CD14-positive monocyte (primary cell): ENCODE measurements at regions of chr11 and their contacts with region 1.

Region 1: DNA sequence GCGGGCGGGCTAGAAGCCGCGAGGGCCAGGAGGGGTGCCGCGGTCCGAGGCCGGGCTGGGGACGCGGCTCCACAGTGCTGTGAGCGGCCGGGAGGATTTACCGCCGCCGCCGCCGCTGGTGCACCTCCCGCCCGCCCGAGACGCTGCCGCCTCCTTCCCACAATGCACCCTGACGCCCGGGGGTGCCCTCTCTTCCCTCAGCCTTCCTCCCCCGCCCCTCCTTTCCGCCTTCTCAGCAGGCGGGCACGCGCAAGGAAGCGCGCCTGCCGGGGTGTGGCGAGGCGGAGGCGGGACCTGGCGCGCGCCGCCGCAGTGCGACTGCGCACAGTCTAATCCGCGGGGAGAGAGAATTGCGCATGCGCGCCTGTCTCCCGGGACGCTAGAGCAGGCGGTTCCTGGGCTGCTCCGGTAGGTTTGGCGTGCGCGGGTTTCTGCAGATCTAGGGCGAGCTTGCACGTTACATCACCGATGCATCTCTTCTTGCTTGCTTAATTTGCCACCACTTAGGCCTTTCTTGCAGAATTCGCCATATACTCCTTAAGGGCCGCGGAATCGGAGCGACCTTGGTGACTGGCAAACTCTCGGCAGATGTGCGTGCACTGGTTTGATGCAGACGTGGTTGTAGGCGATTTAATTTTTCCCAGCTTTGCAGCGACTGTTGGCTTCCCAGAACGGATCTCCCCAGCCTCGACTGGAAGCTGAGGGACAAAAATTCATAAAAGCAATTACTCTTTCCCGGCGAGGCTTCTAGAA is at the starts of genes GVQW3 and THAP12:
- DNase-seq: peak; percentile 97 to 98 (median 98)
- H3K4me3 ChIP-seq: peak within 1 kb of the TSS; percentile 70 to 93 (median 74)
- H3K4me3 Mint-ChIP-seq: peak within 1 kb of the TSS; percentile 96 to 97
- H3K27ac ChIP-seq: peak within 1 kb of the TSS; percentile 11 to 84
- H3K27ac Mint-ChIP-seq: peak within 1 kb of the TSS; percentile 88 to 96 (median 93)
- H3K4me1 ChIP-seq: peaks cover 28 to 37% of the 10 kb centered on the region in 2 donors
- H3K4me1 Mint-ChIP-seq: peaks cover 59% of the 10 kb centered on the region
- H3K27me3 ChIP-seq: no peaks in the 10 kb centered on the region
- H3K27me3 Mint-ChIP-seq: peaks cover 0 to 4% (median 0%) of the 10 kb centered on the region in 3 donors
- CTCF ChIP-seq: peak; percentile 39
- polyA plus RNA-seq, gene GVQW3: 0.15 to 1.1 TPM in 2 of 3 donors, not detected in the other
- polyA plus RNA-seq, gene THAP12: 18.3 to 22.5 (median 20.0) TPM

Region 2: GRCh38 chr11:76235233-76236091 is 145.7 kb before region 1 on chr11:
- intact Hi-C with region 1: loop called in 1 of 2 experiments (anchors 10 kb)
- DNase-seq: peak; percentile 88 to 90 (median 90)
- H3K4me3 ChIP-seq: peak overlapping the region; percentile 62 to 86 (median 75)
- H3K4me3 Mint-ChIP-seq: peak overlapping the region; percentile 95 to 96
- H3K27ac ChIP-seq: peak overlapping the region; percentile 89 to 91
- H3K27ac Mint-ChIP-seq: peak overlapping the region; percentile 97 to 99 (median 99)
- H3K4me1 ChIP-seq: peaks cover 30 to 41% of the 10 kb centered on the region in 2 donors
- H3K4me1 Mint-ChIP-seq: peaks cover 33% of the 10 kb centered on the region
- H3K27me3 ChIP-seq: no peaks in the 10 kb centered on the region
- H3K27me3 Mint-ChIP-seq: peaks cover 0 to 10% (median 3%) of the 10 kb centered on the region in 3 donors
- CTCF ChIP-seq: no peak

Region 3: GRCh38 chr11:76339221-76339620 is 41.9 kb before region 1 on chr11:
- intact Hi-C with region 1: loop called in 1 of 2 experiments (anchors 5 kb)
- DNase-seq: peak; percentile 77 to 88 (median 81)
- H3K4me3 ChIP-seq: peak overlapping the region in 1 of 3 experiments; percentile 23
- H3K4me3 Mint-ChIP-seq: peak overlapping the region in 1 of 2 donors; percentile 71
- H3K27ac ChIP-seq: peak overlapping the region; percentile 83 to 86
- H3K27ac Mint-ChIP-seq: peak overlapping the region; percentile 88 to 94 (median 91)
- H3K4me1 ChIP-seq: peaks cover 51 to 52% of the 10 kb centered on the region in 2 donors
- H3K4me1 Mint-ChIP-seq: peaks cover 48% of the 10 kb centered on the region
- H3K27me3 ChIP-seq: no peaks in the 10 kb centered on the region
- H3K27me3 Mint-ChIP-seq: peaks cover 5 to 14% (median 13%) of the 10 kb centered on the region in 3 donors
- CTCF ChIP-seq: no peak

Region 4: GRCh38 chr11:76444384-76445123 is 63.4 kb after region 1 on chr11 and contains the start of gene EMSY:
- intact Hi-C with region 1: loop called (anchors 2 to 5 kb)
- DNase-seq: peak; percentile 97 to 98 (median 98)
- H3K4me3 ChIP-seq: peak within 1 kb of the TSS; percentile 69 to 100 (median 99)
- H3K4me3 Mint-ChIP-seq: peak within 1 kb of the TSS; percentile 96 to 97
- H3K27ac ChIP-seq: peak within 1 kb of the TSS; percentile 81 to 98
- H3K27ac Mint-ChIP-seq: peak within 1 kb of the TSS; percentile 92 to 98 (median 98)
- H3K4me1 ChIP-seq: peaks cover 16 to 25% of the 10 kb centered on the region in 2 donors
- H3K4me1 Mint-ChIP-seq: peaks cover 19% of the 10 kb centered on the region
- H3K27me3 ChIP-seq: no peaks in the 10 kb centered on the region
- H3K27me3 Mint-ChIP-seq: no peaks in the 10 kb centered on the region
- CTCF ChIP-seq: no peak
- polyA plus RNA-seq, gene EMSY: 9.2 to 31.3 (median 9.4) TPM